ENCODE measurements at regions of chr18 and their contacts with region 1.

Region 1: DNA sequence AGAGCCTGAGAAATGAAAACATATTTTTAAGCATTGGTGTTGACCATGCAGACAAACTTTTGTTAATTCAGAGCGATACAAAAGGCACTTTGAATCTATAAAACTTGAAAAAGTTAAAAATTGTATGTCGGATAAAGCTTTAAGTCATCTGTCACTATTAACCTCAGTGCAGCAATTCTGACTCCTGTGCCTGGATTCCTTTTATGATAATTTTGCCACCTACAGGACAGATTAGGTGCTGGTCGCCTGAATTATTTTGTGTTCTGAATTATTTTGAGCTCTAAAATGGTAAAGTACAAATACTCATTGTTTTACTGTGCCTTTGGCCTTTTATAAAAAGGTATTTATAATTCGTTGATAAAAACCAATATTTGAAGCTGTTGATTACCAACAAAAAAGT is 19.4 kb upstream of the RNF138 start:
- DNase-seq: peak in 10 of 35 experiments; percentile 4 to 62 (median 10)
- ATAC-seq: peak; percentile 61 to 78 (median 69)
- H3K4me3 ChIP-seq: no peak overlapping the region
- H3K4me3 Mint-ChIP-seq: no peak overlapping the region
- H3K27ac ChIP-seq: no peak overlapping the region
- H3K27ac Mint-ChIP-seq: peak overlapping the region; percentile 49 to 74
- H3K4me1 ChIP-seq: peaks cover 0 to 2% of the 10 kb centered on the region in 2 experiments
- H3K4me1 Mint-ChIP-seq: peaks cover 10 to 18% (median 14%) of the 10 kb centered on the region in 3 donors
- H3K27me3 ChIP-seq: no peaks in the 10 kb centered on the region
- H3K27me3 Mint-ChIP-seq: no peaks in the 10 kb centered on the region

Region 2: DNA sequence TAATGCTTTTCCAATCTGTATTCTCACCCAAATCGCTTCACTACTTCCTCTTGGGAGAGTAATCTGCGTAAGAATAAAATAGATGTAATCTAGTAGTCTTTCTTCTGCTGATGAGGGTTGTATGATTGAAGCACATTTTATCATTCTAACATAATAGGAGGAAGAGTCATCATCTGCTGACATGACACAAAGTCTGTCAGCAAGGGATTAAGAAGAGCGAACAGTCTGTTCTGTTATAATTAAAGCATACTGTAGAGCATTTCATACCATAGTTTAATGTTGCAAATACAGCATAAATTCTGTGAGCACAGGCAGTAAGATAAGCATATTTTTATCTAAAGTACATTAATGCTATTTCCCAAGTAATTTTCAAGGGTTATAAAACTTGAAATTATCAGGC is 322.0 kb before region 1 on chr18:
- CTCF ChIA-PET with region 1: no interaction called
- POLR2A ChIA-PET with region 1: no interaction called
- DNase-seq: no peak
- ATAC-seq: no peak
- H3K4me3 ChIP-seq: no peak overlapping the region
- H3K4me3 Mint-ChIP-seq: no peak overlapping the region
- H3K27ac ChIP-seq: no peak overlapping the region
- H3K27ac Mint-ChIP-seq: no peak overlapping the region
- H3K4me1 ChIP-seq: no peaks in the 10 kb centered on the region
- H3K4me1 Mint-ChIP-seq: no peaks in the 10 kb centered on the region
- H3K27me3 ChIP-seq: peaks cover 0 to 2% of the 10 kb centered on the region in 2 experiments
- H3K27me3 Mint-ChIP-seq: peaks cover 1 to 3% of the 10 kb centered on the region in 2 donors

Region 3: GRCh38 chr18:31942999-31943865 is 129.1 kb before region 1 on chr18 and contains the start of gene TRAPPC8:
- CTCF ChIA-PET with region 1: interaction called in 1 of 2 experiments, 31 read pairs
- POLR2A ChIA-PET with region 1: interaction called in 1 of 2 experiments, 6 read pairs
- DNase-seq: peak; percentile 82 to 95 (median 90)
- ATAC-seq: peak; percentile 87 to 89 (median 88)
- H3K4me3 ChIP-seq: peak within 1 kb of the TSS; percentile 81 to 97
- H3K4me3 Mint-ChIP-seq: peak within 1 kb of the TSS; percentile 93 to 99 (median 98)
- H3K27ac ChIP-seq: peak within 1 kb of the TSS; percentile 92
- H3K27ac Mint-ChIP-seq: peak within 1 kb of the TSS; percentile 98 to 99
- H3K4me1 ChIP-seq: peaks cover 17 to 31% of the 10 kb centered on the region in 2 experiments
- H3K4me1 Mint-ChIP-seq: peaks cover 46 to 54% (median 52%) of the 10 kb centered on the region in 3 donors
- H3K27me3 ChIP-seq: no peaks in the 10 kb centered on the region
- H3K27me3 Mint-ChIP-seq: no peaks in the 10 kb centered on the region
- total RNA-seq, gene TRAPPC8: 44.7 to 62.0 (median 51.8) TPM

Region 4: DNA sequence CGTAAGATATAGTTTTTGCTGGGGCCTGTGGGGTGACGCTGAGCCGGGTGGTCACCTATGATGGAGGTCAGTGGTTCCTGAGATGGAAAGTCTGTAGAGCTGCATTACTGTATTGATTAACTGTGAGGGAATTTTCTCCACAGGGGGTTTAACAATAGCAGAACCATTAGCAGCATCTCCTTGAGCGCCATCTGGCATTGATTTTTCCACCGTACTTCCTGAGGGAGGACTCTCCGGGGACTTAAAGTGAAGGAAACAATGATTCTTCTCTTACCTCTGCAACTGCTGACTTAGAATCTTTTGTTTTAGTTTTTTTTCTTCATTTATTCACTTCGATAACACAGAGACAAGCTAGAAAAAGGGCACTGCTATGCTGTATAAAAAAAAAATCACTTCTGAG is 76.3 kb before region 1 on chr18:
- CTCF ChIA-PET with region 1: no interaction called
- POLR2A ChIA-PET with region 1: no interaction called
- DNase-seq: no peak
- ATAC-seq: no peak
- H3K4me3 ChIP-seq: no peak overlapping the region
- H3K4me3 Mint-ChIP-seq: no peak overlapping the region
- H3K27ac ChIP-seq: no peak overlapping the region
- H3K27ac Mint-ChIP-seq: no peak overlapping the region
- H3K4me1 ChIP-seq: no peaks in the 10 kb centered on the region
- H3K4me1 Mint-ChIP-seq: no peaks in the 10 kb centered on the region
- H3K27me3 ChIP-seq: no peaks in the 10 kb centered on the region
- H3K27me3 Mint-ChIP-seq: no peaks in the 10 kb centered on the region

Region 5: DNA sequence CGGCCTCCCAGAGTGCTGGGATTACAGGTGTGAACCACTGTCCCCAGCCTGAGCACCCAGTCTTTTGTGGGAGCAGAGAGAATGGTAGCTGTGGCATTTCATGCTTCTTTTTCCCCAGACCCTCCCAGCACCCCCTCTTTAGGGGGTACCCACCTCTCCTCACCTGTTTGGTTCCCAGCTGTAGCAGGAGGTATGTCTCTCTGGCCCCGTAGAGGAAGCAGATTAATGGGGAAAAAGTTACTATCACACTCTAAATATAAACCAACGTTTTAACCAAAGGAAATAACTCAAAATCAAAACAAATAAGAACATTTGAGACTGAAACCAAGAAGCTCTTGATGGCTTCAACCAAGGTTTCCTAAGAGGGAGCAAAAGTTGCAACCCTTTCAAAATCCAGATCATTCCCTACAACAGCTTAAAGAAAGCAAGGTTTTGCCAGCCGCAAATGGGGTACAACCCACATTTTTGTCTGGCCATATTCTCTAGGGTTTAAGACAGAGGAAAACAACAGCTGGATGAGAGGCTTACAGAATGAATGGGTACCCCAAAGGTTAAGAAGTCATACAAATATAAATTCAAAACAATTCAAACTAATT is 45.7 kb before region 1 on chr18:
- CTCF ChIA-PET with region 1: interaction called in 1 of 2 experiments, 13 read pairs
- POLR2A ChIA-PET with region 1: interaction called, 6 to 9 read pairs
- DNase-seq: no peak
- ATAC-seq: peak in 1 of 4 experiments; percentile 9
- H3K4me3 ChIP-seq: peak overlapping the region in 1 of 2 donors; percentile 38
- H3K4me3 Mint-ChIP-seq: peak overlapping the region; percentile 51 to 72 (median 60)
- H3K27ac ChIP-seq: peak overlapping the region; percentile 3
- H3K27ac Mint-ChIP-seq: peak overlapping the region; percentile 87 to 91
- H3K4me1 ChIP-seq: peaks cover 32 to 63% of the 10 kb centered on the region in 2 experiments
- H3K4me1 Mint-ChIP-seq: peaks cover 74 to 84% (median 81%) of the 10 kb centered on the region in 3 donors
- H3K27me3 ChIP-seq: no peaks in the 10 kb centered on the region
- H3K27me3 Mint-ChIP-seq: no peaks in the 10 kb centered on the region

Region 6: DNA sequence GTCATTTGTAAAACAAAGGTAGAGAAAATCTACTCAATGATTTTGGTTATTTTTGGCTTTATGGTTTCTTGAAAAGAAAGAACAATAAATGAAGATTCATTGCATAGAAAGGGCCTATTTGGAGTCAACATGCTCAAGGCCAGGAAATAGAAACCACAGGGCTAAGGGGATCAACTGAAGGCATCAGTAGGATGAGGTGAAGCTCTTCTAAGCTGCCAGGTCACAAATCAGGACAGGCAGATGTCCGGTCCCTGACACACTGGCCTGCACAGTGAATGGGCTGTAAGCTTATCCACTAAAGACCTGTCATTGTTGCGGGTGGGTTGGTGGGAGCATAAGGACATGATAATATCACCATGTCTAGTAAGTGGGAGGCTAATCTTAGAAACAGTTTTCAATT is 12.3 kb before region 1 on chr18:
- CTCF ChIA-PET with region 1: interaction called, 3 to 10 read pairs
- POLR2A ChIA-PET with region 1: no interaction called
- DNase-seq: no peak
- ATAC-seq: peak in 1 of 4 experiments; percentile 38
- H3K4me3 ChIP-seq: no peak overlapping the region
- H3K4me3 Mint-ChIP-seq: no peak overlapping the region
- H3K27ac ChIP-seq: no peak overlapping the region
- H3K27ac Mint-ChIP-seq: peak overlapping the region; percentile 29 to 81
- H3K4me1 ChIP-seq: peaks cover 2 to 7% of the 10 kb centered on the region in 2 experiments
- H3K4me1 Mint-ChIP-seq: peaks cover 49 to 56% (median 51%) of the 10 kb centered on the region in 3 donors
- H3K27me3 ChIP-seq: no peaks in the 10 kb centered on the region
- H3K27me3 Mint-ChIP-seq: no peaks in the 10 kb centered on the region

Region 7: GRCh38 chr18:32110005-32110404 is 37.7 kb after region 1 on chr18:
- CTCF ChIA-PET with region 1: interaction called in 1 of 2 experiments, 4 read pairs
- POLR2A ChIA-PET with region 1: interaction called in 1 of 2 experiments, 13 read pairs
- DNase-seq: no peak
- ATAC-seq: no peak
- H3K4me3 ChIP-seq: no peak overlapping the region
- H3K4me3 Mint-ChIP-seq: no peak overlapping the region
- H3K27ac ChIP-seq: no peak overlapping the region
- H3K27ac Mint-ChIP-seq: no peak overlapping the region
- H3K4me1 ChIP-seq: peaks cover 6 to 21% of the 10 kb centered on the region in 2 experiments
- H3K4me1 Mint-ChIP-seq: peaks cover 69 to 76% (median 75%) of the 10 kb centered on the region in 3 donors
- H3K27me3 ChIP-seq: no peaks in the 10 kb centered on the region
- H3K27me3 Mint-ChIP-seq: no peaks in the 10 kb centered on the region